ENCODE measurements at regions of chr12 and their contacts with region 1.

Region 1: GRCh38 chr12:95976416-95976832 is 19.7 kb downstream of the HAL start:
- DNase-seq: peak; percentile 82
- ATAC-seq: peak; percentile 86
- H3K4me3 ChIP-seq: 0 out of 6 replicates have a peak overlapping the region, but pooled peaks of 1 of the 3 experiments have one; percentile 11
- H3K27ac ChIP-seq: peak overlapping the region; percentile 74
- H3K4me1 ChIP-seq: peaks cover 82% of the 10 kb centered on the region
- H3K27me3 ChIP-seq: no peaks in the 10 kb centered on the region
- CTCF ChIP-seq: no peak
- EP300 ChIP-seq: peak; percentile 27 to 88; a peak in 2 of 4 replicates
- POLR2A ChIP-seq: no peak
- RAD21 ChIP-seq: no peak

Region 2: GRCh38 chr12:95966287-95966870 is 10.0 kb before region 1 on chr12:
- CTCF ChIA-PET with region 1: no interaction called
- POLR2A ChIA-PET with region 1: interaction called, 64 read pairs
- in situ Hi-C with region 1: no loop called
- intact Hi-C with region 1: loop called (anchors 1 kb)
- DNase-seq: peak; percentile 87
- ATAC-seq: peak; percentile 96
- H3K4me3 ChIP-seq: peak overlapping the region in 2 of 3 experiments; percentile 32 to 38; a peak in 3 of 6 replicates
- H3K27ac ChIP-seq: peak overlapping the region; percentile 85
- H3K4me1 ChIP-seq: peaks cover 47% of the 10 kb centered on the region
- H3K27me3 ChIP-seq: no peaks in the 10 kb centered on the region
- CTCF ChIP-seq: no peak
- EP300 ChIP-seq: peak in 1 of 2 experiments; percentile 83; a peak in 2 of 4 replicates
- POLR2A ChIP-seq: peak; percentile 39 to 41; a peak in 1 of 4 replicates
- RAD21 ChIP-seq: 0 out of 2 replicates have a peak, but pooled peaks have one; percentile 26

Region 3: DNA sequence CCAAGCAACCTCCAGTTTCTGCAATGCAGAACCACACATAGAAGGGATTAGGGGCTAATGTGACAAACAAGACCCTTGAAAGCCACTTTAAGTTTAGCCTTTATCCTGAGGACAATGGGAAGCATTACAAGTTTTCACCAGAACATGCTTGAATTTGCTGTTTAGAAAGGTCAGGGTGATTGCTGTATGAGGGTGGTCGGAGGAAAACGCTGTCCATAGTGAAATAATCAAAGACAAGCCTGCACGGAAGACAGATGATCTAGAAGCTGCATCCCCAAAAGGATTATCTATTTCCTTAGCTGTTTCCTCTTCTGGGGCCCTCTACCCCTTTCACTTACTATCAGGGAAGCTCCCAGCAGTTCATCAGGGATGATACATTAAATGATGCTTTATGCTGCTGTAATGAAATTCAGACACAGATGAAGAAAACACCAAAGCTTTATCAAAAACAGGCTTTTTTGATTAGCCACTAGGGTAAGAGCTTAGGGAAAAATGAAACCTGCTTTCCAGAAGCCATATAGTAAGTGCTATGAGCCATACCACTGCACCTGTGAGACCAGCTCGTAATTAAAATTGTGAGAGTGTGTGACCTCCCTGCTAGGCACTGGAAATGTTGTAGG is 13.2 kb after region 1 on chr12:
- CTCF ChIA-PET with region 1: no interaction called
- POLR2A ChIA-PET with region 1: interaction called, 30 read pairs
- in situ Hi-C with region 1: no loop called
- intact Hi-C with region 1: no loop called
- DNase-seq: no peak
- ATAC-seq: no peak
- H3K4me3 ChIP-seq: no peak overlapping the region
- H3K27ac ChIP-seq: no peak overlapping the region
- H3K4me1 ChIP-seq: peaks cover 8% of the 10 kb centered on the region
- H3K27me3 ChIP-seq: no peaks in the 10 kb centered on the region
- CTCF ChIP-seq: no peak
- EP300 ChIP-seq: no peak
- POLR2A ChIP-seq: no peak
- RAD21 ChIP-seq: no peak

Region 4: DNA sequence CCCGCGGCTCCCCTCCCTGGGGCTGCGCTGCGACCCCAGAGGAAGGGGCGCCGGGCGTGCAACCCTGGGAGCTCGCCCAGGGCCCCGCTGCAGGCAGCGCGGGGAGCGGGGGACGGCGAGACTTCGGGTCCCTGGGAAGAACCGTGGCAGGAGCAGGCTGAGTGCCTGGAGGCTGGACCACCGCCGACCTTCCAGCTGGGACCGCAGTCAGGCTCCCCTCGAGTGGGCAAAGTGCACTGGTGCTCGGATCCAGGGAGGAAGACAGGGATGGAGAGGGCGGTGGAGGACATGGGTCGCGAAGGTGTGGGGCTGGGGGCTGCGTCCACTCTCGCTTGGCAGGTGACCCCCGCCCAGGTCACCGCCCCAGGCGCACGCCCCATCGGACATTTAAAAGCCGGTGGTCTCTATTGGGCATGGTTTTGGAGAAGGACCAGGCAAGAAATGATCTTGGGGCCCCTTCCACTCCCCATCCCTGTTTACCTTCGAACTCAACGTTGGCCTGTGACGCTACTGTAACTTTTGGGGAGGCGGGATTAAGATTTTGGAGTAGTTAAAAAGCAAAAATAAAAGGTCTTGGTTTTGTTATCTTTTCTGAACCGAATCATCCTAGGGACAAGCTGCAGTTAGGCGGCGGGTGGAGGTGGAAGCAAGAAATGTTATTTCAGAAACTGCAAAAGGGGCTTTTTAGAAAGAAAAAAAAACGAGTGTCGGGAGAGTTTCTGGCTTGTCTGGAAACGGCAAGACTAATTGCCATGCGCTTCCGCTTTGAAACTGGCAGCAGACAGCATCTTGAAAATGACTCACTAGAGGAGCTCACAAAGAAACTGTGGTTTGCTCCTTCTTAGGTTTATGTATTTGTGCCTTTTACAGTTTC is 218.8 kb after region 1 on chr12:
- CTCF ChIA-PET with region 1: no interaction called
- POLR2A ChIA-PET with region 1: no interaction called
- in situ Hi-C with region 1: no loop called
- intact Hi-C with region 1: no loop called
- DNase-seq: no peak
- ATAC-seq: peak; percentile 60
- H3K4me3 ChIP-seq: peak overlapping the region; percentile 69 to 84 (median 82)
- H3K27ac ChIP-seq: no peak overlapping the region
- H3K4me1 ChIP-seq: peaks cover 22% of the 10 kb centered on the region
- H3K27me3 ChIP-seq: no peaks in the 10 kb centered on the region; a peak in 1 of 5 replicates
- CTCF ChIP-seq: no peak
- EP300 ChIP-seq: no peak
- POLR2A ChIP-seq: no peak
- RAD21 ChIP-seq: no peak